Mammary epithelial cell (primary cell): ENCODE measurements at regions of chr10 and their contacts with region 1.

Region 1: GRCh38 chr10:12710594-12711349 is 290.7 kb downstream of the CCDC3 start:
- DNase-seq: peak; percentile 65
- H3K4me3 ChIP-seq: no peak overlapping the region
- H3K27ac ChIP-seq: peak overlapping the region; percentile 4
- H3K4me1 ChIP-seq: peaks cover 33% of the 10 kb centered on the region
- H3K27me3 ChIP-seq: no peaks in the 10 kb centered on the region
- CTCF ChIP-seq: peak; percentile 96 to 99

Region 2: DNA sequence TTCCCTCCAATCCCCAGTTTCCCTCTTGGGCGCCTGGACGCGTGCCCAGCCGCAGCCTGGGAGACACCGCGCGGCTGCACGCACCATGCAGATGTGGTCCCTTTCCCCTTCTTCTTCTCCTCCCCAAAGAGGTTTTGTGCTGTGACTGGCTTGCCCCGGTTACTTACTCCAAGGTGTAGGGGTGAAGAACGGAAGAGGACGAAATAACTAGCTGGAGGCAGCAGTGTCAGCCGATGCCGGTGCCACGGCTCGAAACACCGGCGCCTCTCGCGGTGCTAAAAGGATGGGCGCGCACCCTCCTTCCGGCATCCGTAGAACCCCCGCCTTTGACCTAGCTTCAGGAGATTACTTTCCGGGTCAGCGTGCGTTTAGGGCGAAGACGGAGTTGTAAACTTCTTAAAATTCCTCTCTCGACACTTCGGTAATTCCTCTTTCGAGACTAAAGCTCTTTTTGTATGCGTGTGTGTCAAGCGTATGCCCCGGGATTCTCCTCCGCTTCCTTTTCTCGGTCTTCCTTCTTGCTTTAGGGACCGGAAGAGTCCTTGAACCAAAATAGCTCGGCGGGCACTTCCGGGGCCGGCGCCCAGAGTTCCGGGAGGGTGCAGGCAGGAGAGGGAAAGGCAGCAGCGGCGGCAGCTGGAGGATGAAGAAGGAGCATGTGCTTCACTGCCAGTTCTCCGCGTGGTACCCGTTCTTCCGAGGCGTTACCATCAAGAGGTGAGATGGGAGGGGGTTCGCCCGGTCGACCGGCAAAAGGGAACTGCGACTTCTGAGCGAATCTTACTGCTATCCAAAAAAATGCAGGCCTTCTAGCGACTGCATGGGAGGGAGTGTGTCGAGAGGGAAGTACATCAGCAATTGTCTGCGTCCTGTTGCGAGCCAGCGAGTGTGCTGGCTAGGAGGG is 514.9 kb before region 1 on chr10 and contains the starts of genes CDC123 and NUDT5:
- CTCF ChIA-PET with region 1: no interaction called
- dilution Hi-C with region 1: no loop called
- in situ Hi-C with region 1: no loop called
- intact Hi-C with region 1: loop called (anchors 5 kb)
- DNase-seq: peak; percentile 89
- H3K4me3 ChIP-seq: peak within 1 kb of the TSS; percentile 67 to 84 (median 77)
- H3K27ac ChIP-seq: peak within 1 kb of the TSS; percentile 90
- H3K4me1 ChIP-seq: peaks cover 22% of the 10 kb centered on the region
- H3K27me3 ChIP-seq: no peaks in the 10 kb centered on the region
- CTCF ChIP-seq: peak in 1 of 2 donors; percentile 17
- total RNA-seq, gene CDC123: 73.5 to 97.0 TPM
- total RNA-seq, gene NUDT5: 46.3 to 78.9 TPM

Region 3: GRCh38 chr10:12333380-12334185 is 377.2 kb before region 1 on chr10:
- CTCF ChIA-PET with region 1: no interaction called
- dilution Hi-C with region 1: no loop called
- in situ Hi-C with region 1: loop called in 1 of 2 experiments (anchors 5 kb)
- intact Hi-C with region 1: loop called (anchors 5 kb)
- DNase-seq: peak; percentile 98
- H3K4me3 ChIP-seq: peak overlapping the region in 1 of 3 experiments; percentile 13
- H3K27ac ChIP-seq: peak overlapping the region; percentile 94
- H3K4me1 ChIP-seq: peaks cover 18% of the 10 kb centered on the region
- H3K27me3 ChIP-seq: no peaks in the 10 kb centered on the region
- CTCF ChIP-seq: no peak

Region 4: GRCh38 chr10:12566161-12567115 is 144.3 kb before region 1 on chr10:
- CTCF ChIA-PET with region 1: no interaction called
- dilution Hi-C with region 1: no loop called
- in situ Hi-C with region 1: no loop called
- intact Hi-C with region 1: no loop called
- DNase-seq: no peak
- H3K4me3 ChIP-seq: no peak overlapping the region
- H3K27ac ChIP-seq: no peak overlapping the region
- H3K4me1 ChIP-seq: no peaks in the 10 kb centered on the region
- H3K27me3 ChIP-seq: no peaks in the 10 kb centered on the region
- CTCF ChIP-seq: no peak

Region 5: GRCh38 chr10:12617191-12618175 is 93.3 kb before region 1 on chr10:
- CTCF ChIA-PET with region 1: no interaction called
- dilution Hi-C with region 1: no loop called
- in situ Hi-C with region 1: no loop called
- intact Hi-C with region 1: no loop called
- DNase-seq: peak; percentile 14
- H3K4me3 ChIP-seq: no peak overlapping the region
- H3K27ac ChIP-seq: no peak overlapping the region
- H3K4me1 ChIP-seq: no peaks in the 10 kb centered on the region
- H3K27me3 ChIP-seq: no peaks in the 10 kb centered on the region
- CTCF ChIP-seq: no peak

Region 6: DNA sequence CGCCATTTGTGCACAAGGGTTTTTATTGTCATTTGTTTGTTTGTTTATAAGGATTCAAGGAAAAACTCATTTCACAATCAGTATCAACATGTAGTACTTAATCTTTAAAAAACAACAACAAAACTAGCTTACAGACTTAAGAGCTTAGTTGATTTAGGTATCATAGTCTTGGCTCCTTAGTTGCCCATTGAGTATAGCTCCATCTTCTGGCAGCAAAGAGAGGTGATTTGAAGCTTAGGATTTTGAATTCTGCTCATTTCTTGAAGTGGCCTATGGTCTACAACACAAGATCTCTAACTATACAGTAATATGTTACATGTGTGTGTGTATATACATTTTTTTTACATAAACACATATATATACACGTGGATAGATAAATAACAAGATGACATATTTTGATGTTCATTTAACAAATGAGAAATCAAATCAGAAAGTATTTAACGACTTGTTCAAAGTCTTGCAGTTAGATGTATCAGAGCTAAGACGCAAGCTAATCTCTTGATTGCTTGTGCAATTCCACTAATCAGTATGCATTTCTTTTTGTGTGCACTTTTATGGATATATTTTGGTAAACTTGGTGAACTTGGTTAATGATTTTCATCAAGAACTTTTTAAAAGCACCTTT is 54.1 kb before region 1 on chr10:
- CTCF ChIA-PET with region 1: no interaction called
- dilution Hi-C with region 1: loop called (anchors 5 kb)
- in situ Hi-C with region 1: no loop called
- intact Hi-C with region 1: loop called (anchors 2 kb)
- DNase-seq: peak; percentile 39
- H3K4me3 ChIP-seq: no peak overlapping the region
- H3K27ac ChIP-seq: no peak overlapping the region
- H3K4me1 ChIP-seq: no peaks in the 10 kb centered on the region
- H3K27me3 ChIP-seq: no peaks in the 10 kb centered on the region
- CTCF ChIP-seq: peak; percentile 69 to 81

Region 7: DNA sequence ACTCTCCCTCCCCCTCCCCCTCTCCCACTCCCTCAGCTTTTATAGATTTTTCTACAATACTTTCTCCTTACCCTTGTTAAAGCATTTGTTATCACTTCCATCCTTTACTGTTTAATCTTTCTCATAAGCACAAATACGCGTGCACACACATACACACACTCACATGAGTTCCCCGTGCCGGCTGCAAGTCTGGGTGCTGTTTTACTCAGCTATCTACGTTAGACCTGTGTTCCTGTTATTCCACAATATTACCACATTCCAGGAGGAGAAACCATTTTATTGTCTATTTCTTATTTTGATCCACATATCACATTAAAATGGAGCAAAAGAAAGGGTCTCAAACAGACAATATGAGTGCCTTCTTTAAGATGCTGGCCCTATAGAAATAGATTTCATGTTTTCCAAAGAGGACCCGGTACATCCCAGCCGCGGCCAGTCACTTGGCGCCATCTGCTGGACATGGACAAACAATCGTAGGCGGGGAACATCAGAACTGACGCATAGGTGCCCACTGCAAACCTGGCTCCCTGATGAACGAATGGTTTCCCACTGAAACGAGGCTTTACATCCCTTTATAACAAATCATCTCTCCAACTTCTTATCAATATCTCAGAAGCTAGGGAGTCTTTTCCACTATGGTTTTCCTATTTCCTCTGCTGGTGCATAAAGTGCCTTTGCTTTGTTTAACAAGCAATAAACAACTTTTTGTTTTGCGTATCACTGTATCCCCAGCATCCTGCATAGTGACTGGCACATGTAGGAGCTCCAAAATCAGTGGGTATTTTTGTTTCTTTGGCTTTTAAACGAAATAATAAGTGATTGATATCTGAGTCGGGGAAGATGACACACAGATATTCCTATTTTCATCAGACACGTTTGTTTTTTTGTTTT is 364.0 kb after region 1 on chr10:
- CTCF ChIA-PET with region 1: interaction called, 4 read pairs
- dilution Hi-C with region 1: no loop called
- in situ Hi-C with region 1: loop called (anchors 10 to 25 kb)
- intact Hi-C with region 1: loop called (anchors 1 kb)
- DNase-seq: peak; percentile 58
- H3K4me3 ChIP-seq: no peak overlapping the region
- H3K27ac ChIP-seq: no peak overlapping the region
- H3K4me1 ChIP-seq: peaks cover 10% of the 10 kb centered on the region
- H3K27me3 ChIP-seq: no peaks in the 10 kb centered on the region
- CTCF ChIP-seq: peak; percentile 68 to 95